Activated T-helper 1 cell treated with anti-CD3 and anti-CD28 coated beads, Interleukin-12 subunit alpha, Interleukin-12 subunit beta, Interleukin-2, Interleukin-4 antibody, amounts not matched to agents 30 ng/mL and 10 ng/mL and 1 ng/mL, durations not matched to agents 14 hours and 24 hours and 36 hours (primary cell): ENCODE measurements at regions of chr2 and their contacts with region 1.

Region 1: GRCh38 chr2:98438190-98439133 is 6.2 kb upstream of the INPP4A start:
- DNase-seq: no peak
- H3K4me3 Mint-ChIP-seq: peak overlapping the region; percentile 65
- H3K27ac Mint-ChIP-seq: peak overlapping the region; percentile 93
- H3K4me1 Mint-ChIP-seq: peaks cover 45% of the 10 kb centered on the region
- H3K27me3 Mint-ChIP-seq: no peaks in the 10 kb centered on the region

Region 2: DNA sequence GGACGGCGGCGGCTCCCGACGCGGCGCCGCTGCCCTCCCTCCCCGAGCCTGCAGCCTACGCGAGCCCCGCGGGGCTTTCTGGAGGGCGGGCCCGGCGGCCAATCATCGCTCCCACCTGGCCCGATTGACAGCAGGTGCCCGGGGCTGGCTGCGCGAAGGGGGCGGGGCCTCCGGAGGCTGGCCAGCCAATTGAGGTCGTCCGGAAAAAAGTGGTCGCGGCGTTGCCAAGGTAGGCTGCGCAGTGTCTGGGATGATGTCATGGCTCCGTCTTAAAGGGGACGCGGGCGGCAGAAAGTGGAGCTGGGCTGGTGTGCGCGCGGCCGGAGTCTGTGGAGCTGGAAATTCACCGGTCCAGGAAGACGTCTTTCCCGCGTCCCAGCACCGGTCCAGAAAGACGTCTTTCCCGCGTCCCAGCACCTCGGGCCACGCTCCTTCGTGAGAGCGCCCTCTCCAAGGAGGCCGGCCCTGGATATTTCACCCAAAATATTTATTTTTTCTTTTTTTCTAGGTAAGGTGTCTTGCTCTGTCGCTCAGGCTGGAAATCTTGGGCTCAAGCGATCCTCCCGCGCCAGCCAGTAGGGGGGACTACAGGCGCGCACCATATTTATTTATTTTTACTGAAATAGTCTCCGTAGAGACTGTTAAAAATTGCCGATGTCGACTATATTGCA is 774.4 kb before region 1 on chr2 and contains the start of gene ACTR1B:
- intact Hi-C with region 1: loop called (anchors 2 kb)
- DNase-seq: peak; percentile 98
- H3K4me3 Mint-ChIP-seq: peak within 1 kb of the TSS; percentile 94
- H3K27ac Mint-ChIP-seq: peak within 1 kb of the TSS; percentile 97
- H3K4me1 Mint-ChIP-seq: peaks cover 39% of the 10 kb centered on the region
- H3K27me3 Mint-ChIP-seq: no peaks in the 10 kb centered on the region
- total RNA-seq, gene ACTR1B: 101 and 102 TPM in 2 replicates

Region 3: DNA sequence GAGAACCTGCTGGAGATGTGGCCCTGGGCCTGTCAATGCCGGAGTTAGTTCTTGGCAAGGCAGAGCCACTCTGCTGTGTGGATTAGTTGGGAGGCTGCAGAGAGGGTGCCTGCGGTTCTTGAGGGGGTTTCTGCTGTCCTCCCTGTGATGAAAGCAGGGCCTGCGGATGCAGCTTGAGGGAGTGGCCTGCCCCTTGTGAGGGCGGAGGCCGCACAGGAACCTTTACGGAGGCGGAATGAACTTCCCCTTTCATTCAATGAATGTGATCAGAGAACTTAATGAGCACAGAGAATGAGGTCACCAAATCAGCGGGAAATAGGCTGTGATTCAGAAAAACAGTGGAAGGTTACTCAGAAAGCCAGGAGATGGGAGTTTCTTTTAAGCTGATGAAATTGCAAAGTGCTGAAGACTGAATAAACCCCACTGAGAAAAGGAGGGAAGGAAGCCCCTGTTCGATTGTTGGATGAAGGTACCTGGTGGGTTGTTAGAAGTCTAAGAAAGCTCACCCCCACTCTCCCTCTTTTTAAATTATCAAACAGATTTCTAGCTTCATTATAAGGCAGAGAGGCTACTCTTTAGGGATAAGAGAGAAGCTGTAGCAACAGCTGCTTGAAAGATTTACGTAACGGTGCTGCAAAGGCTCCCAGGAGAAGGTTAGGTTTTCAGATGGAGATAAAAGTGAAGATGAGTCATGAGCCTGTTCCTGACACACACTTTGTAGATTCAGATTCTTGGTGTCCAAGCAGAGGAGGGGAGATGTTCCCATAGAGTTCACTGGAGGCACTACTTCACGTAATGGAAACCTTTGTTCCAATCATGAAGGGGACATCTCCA is 304.1 kb before region 1 on chr2:
- intact Hi-C with region 1: no loop called
- DNase-seq: peak; percentile 36
- H3K4me3 Mint-ChIP-seq: peak overlapping the region; percentile 13
- H3K27ac Mint-ChIP-seq: peak overlapping the region; percentile 52
- H3K4me1 Mint-ChIP-seq: peaks cover 19% of the 10 kb centered on the region
- H3K27me3 Mint-ChIP-seq: peaks cover 9% of the 10 kb centered on the region

Region 4: GRCh38 chr2:98412751-98413458 is 25.6 kb before region 1 on chr2:
- intact Hi-C with region 1: loop called (anchors 1 kb)
- DNase-seq: peak; percentile 49
- H3K4me3 Mint-ChIP-seq: no peak overlapping the region
- H3K27ac Mint-ChIP-seq: no peak overlapping the region
- H3K4me1 Mint-ChIP-seq: peaks cover 13% of the 10 kb centered on the region
- H3K27me3 Mint-ChIP-seq: peaks cover 2% of the 10 kb centered on the region

Region 5: GRCh38 chr2:98465456-98466226 is 27.2 kb after region 1 on chr2:
- intact Hi-C with region 1: loop called (anchors 1 kb)
- DNase-seq: peak; percentile 70
- H3K4me3 Mint-ChIP-seq: peak overlapping the region; percentile 84
- H3K27ac Mint-ChIP-seq: peak overlapping the region; percentile 99
- H3K4me1 Mint-ChIP-seq: peaks cover 83% of the 10 kb centered on the region
- H3K27me3 Mint-ChIP-seq: no peaks in the 10 kb centered on the region

Region 6: DNA sequence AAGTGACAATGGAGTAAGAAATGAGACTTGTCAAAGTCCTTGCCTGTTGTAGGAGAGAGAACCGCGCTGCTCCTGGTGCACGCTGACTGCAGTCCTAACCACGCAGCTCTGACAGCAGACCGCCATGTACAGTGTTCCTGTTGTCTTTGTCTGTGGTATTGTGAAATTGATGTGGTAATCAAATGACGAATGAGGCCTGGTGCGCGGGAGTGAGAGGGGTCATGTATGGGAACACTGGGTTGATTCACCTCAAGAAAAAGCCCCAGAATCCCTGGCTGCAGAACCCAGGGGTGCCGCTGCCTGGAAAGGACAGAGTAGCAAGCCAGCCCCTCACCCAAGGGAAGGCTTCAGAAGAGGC is 70.2 kb after region 1 on chr2:
- intact Hi-C with region 1: loop called (anchors 1 kb)
- DNase-seq: peak; percentile 43
- H3K4me3 Mint-ChIP-seq: peak overlapping the region; percentile 31
- H3K27ac Mint-ChIP-seq: peak overlapping the region; percentile 91
- H3K4me1 Mint-ChIP-seq: peaks cover 77% of the 10 kb centered on the region
- H3K27me3 Mint-ChIP-seq: no peaks in the 10 kb centered on the region

Region 7: GRCh38 chr2:98736464-98736889 is 298.0 kb after region 1 on chr2:
- intact Hi-C with region 1: loop called (anchors 2 kb)
- DNase-seq: peak; percentile 26
- H3K4me3 Mint-ChIP-seq: peak overlapping the region; percentile 57
- H3K27ac Mint-ChIP-seq: peak overlapping the region; percentile 69
- H3K4me1 Mint-ChIP-seq: peaks cover 66% of the 10 kb centered on the region
- H3K27me3 Mint-ChIP-seq: peaks cover 2% of the 10 kb centered on the region